Heart right ventricle (tissue), 16 donors: ENCODE measurements at regions of chr17 and their contacts with region 1.

Region 1: GRCh38 chr17:50161023-50161910 is 4.5 kb upstream of the SGCA start:
- DNase-seq: peak; percentile 93 to 94
- ATAC-seq: peak; percentile 77 to 93 (median 88)
- H3K4me3 ChIP-seq: peak overlapping the region; percentile 45 to 64 (median 56)
- H3K27ac ChIP-seq: peak overlapping the region in 9 of 10 donors; percentile 40 to 80 (median 73)
- H3K4me1 ChIP-seq: peaks cover 0 to 43% (median 16%) of the 10 kb centered on the region in 9 donors
- H3K27me3 ChIP-seq: no peaks in the 10 kb centered on the region
- CTCF ChIP-seq: peak; percentile 88 to 98 (median 94)

Region 2: DNA sequence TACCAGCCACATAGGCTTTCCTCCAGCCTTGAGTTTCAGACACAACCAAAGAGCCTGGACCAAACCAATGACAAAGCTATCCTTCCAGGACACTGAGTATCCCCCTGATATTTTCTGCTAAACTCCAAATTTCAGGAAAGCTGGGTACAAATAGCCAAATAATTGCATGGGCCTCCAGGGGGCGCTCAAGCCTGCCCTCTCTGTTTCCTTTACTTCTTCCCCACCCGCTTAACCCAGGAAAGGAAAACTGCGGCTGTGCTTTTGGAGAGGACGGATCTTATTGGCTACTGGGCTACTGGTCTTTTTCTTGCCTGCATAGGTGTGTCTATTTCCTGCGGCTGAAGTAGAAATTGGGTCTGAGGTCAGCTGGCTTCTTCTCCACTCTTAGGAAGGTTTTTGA is 981.0 kb before region 1 on chr17:
- intact Hi-C with region 1: no loop called
- DNase-seq: peak; percentile 59 to 66
- ATAC-seq: peak in 6 of 8 donors; percentile 49 to 81 (median 62)
- H3K4me3 ChIP-seq: no peak overlapping the region
- H3K27ac ChIP-seq: no peak overlapping the region
- H3K4me1 ChIP-seq: peaks cover 0 to 4% (median 0%) of the 10 kb centered on the region in 9 donors
- H3K27me3 ChIP-seq: peaks cover 0 to 4% (median 0%) of the 10 kb centered on the region in 7 donors
- CTCF ChIP-seq: peak; percentile 57 to 84 (median 76)

Region 3: GRCh38 chr17:49739641-49740271 is 421.5 kb before region 1 on chr17:
- intact Hi-C with region 1: no loop called
- DNase-seq: peak; percentile 78 to 81
- ATAC-seq: peak; percentile 54 to 89 (median 78)
- H3K4me3 ChIP-seq: peak overlapping the region in 1 of 10 donors; percentile 42
- H3K27ac ChIP-seq: peak overlapping the region in 7 of 10 donors; percentile 15 to 87 (median 66)
- H3K4me1 ChIP-seq: peaks cover 18 to 81% (median 63%) of the 10 kb centered on the region in 9 donors
- H3K27me3 ChIP-seq: no peaks in the 10 kb centered on the region
- CTCF ChIP-seq: no peak

Region 4: DNA sequence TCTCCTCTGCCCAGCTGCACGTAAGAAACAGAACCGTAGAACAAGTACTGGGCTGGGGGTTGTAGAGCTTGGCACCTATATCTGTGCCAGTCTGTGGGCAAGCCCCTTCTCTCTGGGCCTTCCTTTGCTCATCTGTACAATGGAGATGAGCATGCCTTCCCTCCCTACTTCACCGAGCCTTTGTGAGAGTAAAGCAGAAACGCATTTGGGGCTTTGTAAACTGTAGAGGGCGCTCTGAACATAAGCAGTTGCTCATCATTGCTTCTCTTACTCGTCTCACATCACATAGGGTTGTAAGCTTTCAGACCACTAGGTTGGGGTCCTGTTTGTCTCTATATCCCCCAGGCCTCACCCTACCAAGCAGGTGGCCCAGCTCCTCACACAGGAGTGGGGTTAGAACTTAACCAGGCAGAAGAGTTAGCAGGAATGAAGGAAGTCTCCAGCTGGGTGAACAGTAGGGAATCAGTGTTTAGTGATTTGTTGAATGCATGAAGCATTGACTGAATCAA is 46.4 kb before region 1 on chr17:
- intact Hi-C with region 1: loop called in 5 of 10 experiments (anchors 5 to 10 kb)
- DNase-seq: no peak
- ATAC-seq: peak in 2 of 8 donors; percentile 11 to 15
- H3K4me3 ChIP-seq: no peak overlapping the region
- H3K27ac ChIP-seq: peak overlapping the region in 3 of 10 donors; percentile 91 to 95 (median 95)
- H3K4me1 ChIP-seq: peaks cover 29 to 79% (median 44%) of the 10 kb centered on the region in 9 donors
- H3K27me3 ChIP-seq: peaks cover 0 to 50% (median 0%) of the 10 kb centered on the region in 7 donors
- CTCF ChIP-seq: peak in 7 of 9 donors; percentile 51 to 74 (median 65)

Region 5: GRCh38 chr17:50123649-50124349 is 37.5 kb before region 1 on chr17:
- intact Hi-C with region 1: loop called in 4 of 10 experiments (anchors 5 to 10 kb)
- DNase-seq: no peak
- ATAC-seq: peak in 7 of 8 donors; percentile 7 to 50 (median 29)
- H3K4me3 ChIP-seq: no peak overlapping the region
- H3K27ac ChIP-seq: peak overlapping the region in 4 of 10 donors; percentile 38 to 69 (median 50)
- H3K4me1 ChIP-seq: peaks cover under 1 to 27% (median 12%) of the 10 kb centered on the region in 9 donors
- H3K27me3 ChIP-seq: peaks cover 0 to 42% (median 0%) of the 10 kb centered on the region in 7 donors
- CTCF ChIP-seq: no peak

Region 6: GRCh38 chr17:50139950-50140871 is 21.1 kb before region 1 on chr17:
- intact Hi-C with region 1: loop called in 3 of 10 experiments (anchors 1 kb)
- DNase-seq: peak; percentile 81 to 82
- ATAC-seq: peak; percentile 71 to 87 (median 78)
- H3K4me3 ChIP-seq: peak overlapping the region in 3 of 10 donors; percentile 10 to 19 (median 11)
- H3K27ac ChIP-seq: peak overlapping the region; percentile 29 to 83 (median 72)
- H3K4me1 ChIP-seq: peaks cover 14 to 61% (median 43%) of the 10 kb centered on the region in 9 donors
- H3K27me3 ChIP-seq: no peaks in the 10 kb centered on the region
- CTCF ChIP-seq: peak; percentile 92 to 99 (median 97)

Region 7: DNA sequence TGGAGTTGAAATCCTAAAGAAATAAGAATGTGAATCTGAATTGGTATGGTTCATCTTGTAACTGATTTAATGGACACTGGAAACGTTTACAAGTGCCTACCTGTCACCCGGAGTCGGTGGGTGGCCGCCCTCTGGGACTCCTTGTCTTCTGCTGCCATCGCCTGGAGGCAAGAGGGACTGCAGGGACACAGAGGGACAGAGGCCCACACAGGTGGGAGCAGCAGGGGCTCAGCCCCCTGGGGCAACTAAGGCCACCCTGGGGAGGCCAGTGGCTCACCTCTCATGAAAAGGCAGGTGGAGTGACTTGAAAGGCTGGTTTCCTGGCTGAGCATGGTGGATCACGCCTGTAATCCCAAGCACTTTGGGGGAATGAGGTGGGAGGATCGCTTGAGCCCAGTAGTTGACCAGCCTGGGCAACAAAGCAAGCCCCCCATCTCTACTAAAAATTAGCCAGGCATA is 136.2 kb after region 1 on chr17:
- intact Hi-C with region 1: loop called in 1 of 10 experiments (anchors 10 kb)
- DNase-seq: peak; percentile 71 to 77
- ATAC-seq: peak; percentile 81 to 96 (median 92)
- H3K4me3 ChIP-seq: no peak overlapping the region
- H3K27ac ChIP-seq: no peak overlapping the region
- H3K4me1 ChIP-seq: peaks cover 0 to 3% (median 0%) of the 10 kb centered on the region in 9 donors
- H3K27me3 ChIP-seq: no peaks in the 10 kb centered on the region
- CTCF ChIP-seq: peak; percentile 83 to 98 (median 95)